Cardiac septum (tissue), 1 donor: ENCODE measurements at regions of chr2 and their contacts with region 1.

Region 1: DNA sequence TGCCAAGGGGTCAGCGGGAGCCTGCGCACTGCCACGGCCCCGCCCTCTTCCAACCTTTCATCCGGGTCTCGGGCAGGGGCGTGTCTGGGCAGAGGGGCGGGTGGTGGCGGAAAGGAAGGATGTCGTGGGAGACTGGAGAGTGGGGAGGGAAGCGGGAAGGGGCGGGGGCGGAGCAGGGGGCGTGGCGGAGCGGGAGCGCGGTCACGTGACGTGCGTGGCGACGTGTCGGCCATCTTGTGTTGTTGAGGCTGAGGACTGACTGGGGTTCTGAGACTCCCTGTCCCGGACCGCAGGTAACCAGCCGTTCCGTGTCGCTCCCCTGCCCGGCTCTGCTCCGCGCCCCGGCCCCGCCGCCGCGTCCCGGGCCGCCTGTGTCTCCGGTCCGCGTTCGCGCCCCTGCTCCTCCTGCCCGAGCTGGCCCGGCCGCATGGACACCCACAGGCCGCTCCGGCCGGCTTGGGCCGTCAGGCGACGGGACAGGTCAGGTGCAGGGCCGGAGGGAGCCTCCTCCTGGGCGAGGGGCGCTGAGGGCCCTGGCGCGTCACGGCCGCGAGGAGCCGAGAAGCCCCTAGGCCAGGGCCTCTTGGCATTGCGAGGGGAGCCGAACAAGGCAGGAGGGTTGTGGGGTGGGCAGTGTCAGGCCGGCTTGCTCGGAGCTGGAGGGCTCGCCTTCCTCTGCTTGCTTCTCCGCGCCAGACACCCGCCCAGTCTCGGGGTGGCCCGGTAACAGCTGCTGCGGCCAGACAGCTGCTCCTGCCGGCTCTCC is at the start of gene GIGYF2:
- DNase-seq: peak; percentile 98
- total RNA-seq, gene GIGYF2: 62.5 TPM

Region 2: GRCh38 chr2:232537079-232537478 is 160.2 kb before region 1 on chr2:
- intact Hi-C with region 1: no loop called
- DNase-seq: peak; percentile 20

Region 3: GRCh38 chr2:232772531-232772930 is 75.2 kb after region 1 on chr2:
- intact Hi-C with region 1: no loop called
- DNase-seq: no peak

Region 4: DNA sequence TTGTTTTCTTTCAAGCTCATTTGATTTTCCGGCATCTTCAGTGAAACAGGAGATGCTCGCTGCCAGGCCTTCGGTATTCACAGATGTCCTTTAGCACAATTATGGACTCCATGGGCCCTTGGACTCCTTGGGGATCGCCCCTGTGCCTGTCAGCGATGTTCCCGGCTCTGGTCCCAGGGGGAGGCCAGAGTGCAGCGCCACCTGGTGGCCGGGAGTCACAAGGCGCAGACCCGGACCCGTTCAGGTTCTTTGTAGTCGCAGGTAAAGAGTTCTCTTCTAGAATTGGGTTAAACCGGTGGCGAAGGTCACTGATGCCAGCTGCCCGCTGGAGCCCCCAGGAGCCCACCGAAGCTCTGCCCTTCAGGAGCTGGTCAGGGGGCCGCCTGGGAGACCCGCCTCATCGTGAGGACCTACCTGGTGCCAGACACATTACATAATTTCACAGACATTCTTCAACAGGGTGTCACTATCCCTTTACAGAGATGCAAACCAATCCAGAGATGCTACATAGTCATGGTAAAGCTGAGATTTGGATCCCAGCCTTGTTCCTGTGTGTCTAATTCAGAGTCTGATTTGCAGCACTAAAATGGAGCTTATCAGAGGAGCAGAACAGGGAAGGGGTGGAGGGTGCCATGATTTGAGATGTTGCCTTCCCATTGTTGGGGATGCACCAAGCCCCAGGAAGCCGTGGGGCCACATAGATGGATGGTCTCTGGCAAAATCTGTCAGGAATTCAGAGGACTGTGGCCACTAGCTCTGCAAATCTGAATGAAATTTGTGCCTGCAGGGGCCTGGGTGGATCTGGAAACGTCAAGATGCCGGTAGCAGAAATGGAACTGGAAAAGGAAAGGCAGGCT is 356.9 kb after region 1 on chr2:
- intact Hi-C with region 1: loop called (anchors 10 kb)
- DNase-seq: no peak